ENCODE measurements at regions of chr3 and their contacts with region 1.

Region 1: DNA sequence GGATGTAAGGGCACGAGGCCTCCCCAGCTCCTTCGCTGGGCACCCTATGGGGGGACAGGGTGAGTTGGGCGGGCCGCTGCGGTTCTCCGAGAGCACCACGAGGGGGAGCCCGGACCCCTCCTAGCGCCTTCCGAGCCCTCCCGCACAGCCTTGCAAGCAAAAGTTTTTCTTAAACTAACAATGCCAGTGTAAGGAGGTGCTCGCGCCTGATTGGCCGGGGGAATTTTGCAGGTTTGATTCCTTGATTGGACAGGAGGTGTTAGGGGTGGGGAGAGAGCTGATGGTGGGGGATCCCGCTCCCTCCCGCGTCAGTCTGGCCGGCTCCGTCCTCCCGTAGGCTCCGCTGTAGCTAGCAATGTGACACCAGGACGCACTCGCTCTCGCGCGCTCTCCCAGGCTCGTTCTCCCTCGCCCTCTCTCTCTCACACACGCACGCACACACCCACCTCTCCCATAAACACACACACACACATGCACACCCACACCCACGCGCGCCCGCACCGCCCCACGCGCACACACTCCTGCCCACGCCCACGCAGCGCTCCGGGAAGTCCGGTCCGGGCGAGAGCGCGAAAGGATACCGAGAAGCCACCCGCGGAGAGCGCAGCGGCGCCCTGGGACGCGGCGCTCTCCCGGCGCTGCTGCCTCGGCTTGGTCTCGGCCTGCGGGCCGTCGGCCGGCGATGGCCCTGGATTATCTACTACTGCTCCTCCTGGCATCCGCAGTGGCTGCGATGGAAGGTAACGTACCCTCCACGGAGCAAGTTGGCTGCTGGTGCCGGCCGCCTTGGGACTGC is at the start of gene EPHB1:
- DNase-seq: peak; percentile 82
- H3K4me3 ChIP-seq: peak within 1 kb of the TSS; percentile 42 to 55 (median 44)
- H3K27ac ChIP-seq: no peak within 1 kb of the TSS
- H3K4me1 ChIP-seq: peaks cover 12% of the 10 kb centered on the region
- H3K27me3 ChIP-seq: peaks cover 25% of the 10 kb centered on the region
- CTCF ChIP-seq: peak; percentile 68 to 77
- total RNA-seq, gene EPHB1: 0.24 TPM in 1 of 2 donors, not detected in the other

Region 2: GRCh38 chr3:134752761-134753461 is 42.2 kb before region 1 on chr3:
- CTCF ChIA-PET with region 1: no interaction called
- dilution Hi-C with region 1: no loop called
- in situ Hi-C with region 1: no loop called
- intact Hi-C with region 1: no loop called
- DNase-seq: no peak
- H3K4me3 ChIP-seq: no peak overlapping the region
- H3K27ac ChIP-seq: no peak overlapping the region
- H3K4me1 ChIP-seq: no peaks in the 10 kb centered on the region
- H3K27me3 ChIP-seq: no peaks in the 10 kb centered on the region
- CTCF ChIP-seq: no peak

Region 3: GRCh38 chr3:135383301-135383700 is 588.2 kb after region 1 on chr3:
- CTCF ChIA-PET with region 1: no interaction called
- dilution Hi-C with region 1: no loop called
- in situ Hi-C with region 1: no loop called
- intact Hi-C with region 1: no loop called
- DNase-seq: no peak
- H3K4me3 ChIP-seq: no peak overlapping the region
- H3K27ac ChIP-seq: no peak overlapping the region
- H3K4me1 ChIP-seq: no peaks in the 10 kb centered on the region
- H3K27me3 ChIP-seq: no peaks in the 10 kb centered on the region
- CTCF ChIP-seq: no peak

Region 4: GRCh38 chr3:135503760-135504686 is 708.9 kb after region 1 on chr3:
- CTCF ChIA-PET with region 1: no interaction called
- dilution Hi-C with region 1: no loop called
- in situ Hi-C with region 1: no loop called
- intact Hi-C with region 1: loop called (anchors 1 kb)
- DNase-seq: peak; percentile 40
- H3K4me3 ChIP-seq: no peak overlapping the region
- H3K27ac ChIP-seq: no peak overlapping the region
- H3K4me1 ChIP-seq: no peaks in the 10 kb centered on the region
- H3K27me3 ChIP-seq: no peaks in the 10 kb centered on the region
- CTCF ChIP-seq: peak; percentile 77 to 79

Measured in mammary epithelial cell (primary cell).